Transverse colon (tissue), 4 donors: ENCODE measurements at regions of chr1 and their contacts with region 1.

Region 1: GRCh38 chr1:185871627-185872150 is 137.5 kb downstream of the HMCN1 start:
- DNase-seq: no peak
- H3K4me3 ChIP-seq: no peak overlapping the region
- H3K27ac ChIP-seq: no peak overlapping the region
- H3K4me1 ChIP-seq: peaks cover 0 to 29% (median 2%) of the 10 kb centered on the region in 4 donors
- H3K27me3 ChIP-seq: no peaks in the 10 kb centered on the region
- CTCF ChIP-seq: no peak
- EP300 ChIP-seq: no peak
- POLR2A ChIP-seq: no peak

Region 2: DNA sequence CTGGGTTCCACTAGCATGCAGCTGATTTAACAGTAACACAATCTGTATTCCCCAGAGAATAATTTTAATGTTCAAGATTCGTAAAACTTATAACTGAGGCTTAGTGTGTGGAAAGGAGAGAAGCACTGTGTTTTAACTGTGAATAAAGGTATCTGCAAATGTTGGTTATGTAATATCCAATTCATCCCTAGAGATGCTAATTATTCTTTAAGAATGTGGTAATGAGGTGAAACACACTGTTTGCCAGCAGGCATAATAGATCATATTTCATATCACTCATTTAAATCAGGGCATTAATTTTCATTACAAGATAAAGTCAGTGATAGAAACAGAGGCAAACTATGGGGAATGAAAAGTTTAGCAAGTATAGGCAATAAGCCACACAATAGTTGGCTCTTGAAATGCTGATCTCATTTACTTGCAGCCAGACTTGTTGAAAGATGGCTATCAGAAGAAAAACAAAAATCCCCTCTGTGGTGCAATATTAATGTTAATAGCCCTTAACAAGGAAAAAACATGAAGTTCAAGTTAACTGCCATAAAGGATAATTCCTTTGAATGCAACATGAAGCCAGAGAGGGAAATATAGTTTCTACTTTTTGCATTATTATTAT is 104.1 kb before region 1 on chr1:
- in situ Hi-C with region 1: no loop called
- intact Hi-C with region 1: loop called (anchors 10 kb)
- DNase-seq: no peak
- H3K4me3 ChIP-seq: no peak overlapping the region
- H3K27ac ChIP-seq: no peak overlapping the region
- H3K4me1 ChIP-seq: no peaks in the 10 kb centered on the region
- H3K27me3 ChIP-seq: no peaks in the 10 kb centered on the region
- CTCF ChIP-seq: no peak
- EP300 ChIP-seq: no peak
- POLR2A ChIP-seq: no peak

Region 3: DNA sequence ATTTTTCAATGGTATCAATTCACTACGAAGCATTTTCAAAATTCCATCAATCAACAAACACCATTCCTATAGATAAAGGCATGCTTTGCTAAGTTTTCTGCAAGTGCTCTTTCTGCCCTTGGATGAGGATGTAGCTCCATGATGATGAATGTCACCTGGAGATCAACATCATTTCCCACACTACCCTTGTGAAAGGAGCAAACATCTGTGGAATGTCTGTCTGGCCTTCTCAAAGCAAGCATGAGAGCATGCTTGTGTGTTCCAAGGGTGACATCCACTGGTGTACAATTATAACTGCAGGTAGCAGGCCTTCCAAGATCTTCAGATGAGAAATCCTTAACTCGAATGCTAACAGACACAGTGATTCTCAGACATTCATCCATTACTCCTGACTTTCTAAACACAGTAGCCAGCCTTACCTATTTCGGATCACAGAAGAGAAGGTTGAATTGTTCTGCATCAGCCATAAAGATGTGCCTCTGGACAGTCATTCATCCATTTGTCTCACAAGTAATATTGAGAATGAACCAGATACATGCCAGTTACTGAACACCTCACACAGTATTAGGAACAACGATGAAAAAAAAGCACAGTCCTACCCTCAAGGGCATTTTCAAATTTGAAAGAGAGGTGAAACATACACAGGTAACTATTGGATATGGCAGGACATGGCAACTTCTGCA is 341.0 kb after region 1 on chr1:
- in situ Hi-C with region 1: no loop called
- intact Hi-C with region 1: no loop called
- DNase-seq: peak; percentile 11
- H3K4me3 ChIP-seq: no peak overlapping the region
- H3K27ac ChIP-seq: no peak overlapping the region
- H3K4me1 ChIP-seq: no peaks in the 10 kb centered on the region
- H3K27me3 ChIP-seq: no peaks in the 10 kb centered on the region
- CTCF ChIP-seq: peak; percentile 60 to 84 (median 71)
- EP300 ChIP-seq: no peak
- POLR2A ChIP-seq: no peak